Esophagus muscularis mucosa (tissue), 4 donors: ENCODE measurements at regions of chr11 and their contacts with region 1.

Region 1: DNA sequence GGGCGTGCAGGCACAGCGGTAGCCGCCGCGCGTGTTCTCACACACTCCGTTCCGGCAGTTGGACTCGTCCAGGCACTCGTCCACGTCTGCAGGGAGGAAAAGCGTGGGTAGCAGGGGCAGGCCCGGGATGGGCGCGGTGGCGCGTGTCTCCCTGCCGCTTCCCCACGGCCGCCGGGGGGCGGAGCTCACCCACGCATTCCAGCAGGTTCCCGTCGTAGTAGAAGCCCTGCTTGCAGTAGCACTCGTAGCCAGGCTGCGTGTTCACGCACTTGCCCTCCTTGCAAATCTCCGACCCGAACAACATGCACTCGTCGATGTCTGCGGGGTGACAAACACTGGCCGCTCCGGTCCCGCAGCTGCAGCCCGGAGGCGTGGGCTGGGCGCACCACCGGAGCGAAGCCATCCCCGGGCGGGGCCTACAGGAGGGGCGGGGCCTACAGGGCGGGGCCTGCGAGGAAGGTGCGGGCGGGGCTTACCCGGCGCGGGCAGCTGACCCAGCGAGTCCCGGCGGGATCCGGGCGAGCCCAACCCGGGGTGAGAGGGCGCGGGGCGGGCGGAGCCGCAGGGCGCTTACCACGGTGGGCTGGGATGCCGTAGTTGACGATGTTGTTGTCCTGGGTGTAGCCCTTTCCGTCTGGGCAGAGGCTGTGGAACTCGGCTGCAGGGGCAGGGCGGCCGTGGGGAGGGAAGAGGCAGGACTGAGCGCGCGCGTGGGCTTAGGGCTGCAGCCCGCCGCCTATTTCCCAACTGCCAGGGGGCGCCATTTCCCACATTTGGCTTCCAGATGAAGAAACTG is 15.6 kb downstream of the SCYL1 start:
- DNase-seq: peak; percentile 98
- H3K4me3 ChIP-seq: peak overlapping the region; percentile 56 to 73 (median 58)
- H3K27ac ChIP-seq: peak overlapping the region; percentile 86 to 94 (median 88)
- H3K4me1 ChIP-seq: peaks cover 23 to 36% (median 32%) of the 10 kb centered on the region in 4 donors
- H3K27me3 ChIP-seq: no peaks in the 10 kb centered on the region
- CTCF ChIP-seq: peak; percentile 90 to 97 (median 92)
- EP300 ChIP-seq: no peak
- POLR2A ChIP-seq: peak; percentile 19

Region 2: DNA sequence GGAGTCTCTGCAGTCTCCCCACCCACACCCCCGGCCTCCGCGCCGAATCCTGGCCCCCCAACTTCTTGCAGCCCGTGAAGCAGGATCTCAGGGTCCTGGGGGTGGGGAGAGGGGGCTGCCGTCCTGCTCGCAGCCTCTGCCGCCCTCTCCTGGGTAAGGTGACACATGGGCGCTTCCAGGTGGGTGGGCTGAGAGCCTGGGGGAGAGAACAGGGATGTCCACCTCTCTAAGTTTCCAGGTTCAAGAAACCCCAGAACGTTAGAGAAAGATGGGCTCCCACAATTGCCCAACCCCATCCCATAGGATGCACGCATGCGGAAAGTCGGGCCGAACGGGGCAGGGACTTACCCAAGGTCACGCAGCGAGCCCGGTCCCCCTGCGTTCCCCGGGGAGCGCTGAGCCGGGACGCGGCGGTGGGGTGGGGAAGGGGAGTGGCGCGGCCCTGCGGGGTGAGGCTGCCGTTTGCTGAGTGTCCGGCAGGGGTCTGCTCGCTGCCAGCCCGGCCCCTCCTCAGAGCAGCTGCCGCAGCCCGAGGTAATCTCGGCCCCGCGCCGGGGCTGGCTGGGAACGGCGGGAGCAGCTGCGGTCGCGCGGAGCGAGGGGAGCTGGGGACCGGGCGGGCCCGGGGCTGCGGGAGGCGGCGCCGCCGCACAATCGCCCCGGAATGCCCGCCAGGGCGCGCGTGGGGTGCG is 359.5 kb before region 1 on chr11:
- intact Hi-C with region 1: no loop called
- DNase-seq: no peak
- H3K4me3 ChIP-seq: peak overlapping the region; percentile 81 to 91 (median 87)
- H3K27ac ChIP-seq: peak overlapping the region; percentile 85 to 97 (median 91)
- H3K4me1 ChIP-seq: peaks cover 19 to 41% (median 34%) of the 10 kb centered on the region in 4 donors
- H3K27me3 ChIP-seq: no peaks in the 10 kb centered on the region
- CTCF ChIP-seq: peak in 2 of 3 experiments; percentile 22 to 55
- EP300 ChIP-seq: no peak
- POLR2A ChIP-seq: no peak

Region 3: GRCh38 chr11:65334696-65335295 is 205.7 kb before region 1 on chr11:
- intact Hi-C with region 1: no loop called
- DNase-seq: no peak
- H3K4me3 ChIP-seq: peak overlapping the region; percentile 76 to 88 (median 86)
- H3K27ac ChIP-seq: peak overlapping the region; percentile 82 to 94 (median 90)
- H3K4me1 ChIP-seq: peaks cover 22 to 61% (median 54%) of the 10 kb centered on the region in 4 donors
- H3K27me3 ChIP-seq: no peaks in the 10 kb centered on the region
- CTCF ChIP-seq: no peak
- EP300 ChIP-seq: no peak
- POLR2A ChIP-seq: no peak

Region 4: DNA sequence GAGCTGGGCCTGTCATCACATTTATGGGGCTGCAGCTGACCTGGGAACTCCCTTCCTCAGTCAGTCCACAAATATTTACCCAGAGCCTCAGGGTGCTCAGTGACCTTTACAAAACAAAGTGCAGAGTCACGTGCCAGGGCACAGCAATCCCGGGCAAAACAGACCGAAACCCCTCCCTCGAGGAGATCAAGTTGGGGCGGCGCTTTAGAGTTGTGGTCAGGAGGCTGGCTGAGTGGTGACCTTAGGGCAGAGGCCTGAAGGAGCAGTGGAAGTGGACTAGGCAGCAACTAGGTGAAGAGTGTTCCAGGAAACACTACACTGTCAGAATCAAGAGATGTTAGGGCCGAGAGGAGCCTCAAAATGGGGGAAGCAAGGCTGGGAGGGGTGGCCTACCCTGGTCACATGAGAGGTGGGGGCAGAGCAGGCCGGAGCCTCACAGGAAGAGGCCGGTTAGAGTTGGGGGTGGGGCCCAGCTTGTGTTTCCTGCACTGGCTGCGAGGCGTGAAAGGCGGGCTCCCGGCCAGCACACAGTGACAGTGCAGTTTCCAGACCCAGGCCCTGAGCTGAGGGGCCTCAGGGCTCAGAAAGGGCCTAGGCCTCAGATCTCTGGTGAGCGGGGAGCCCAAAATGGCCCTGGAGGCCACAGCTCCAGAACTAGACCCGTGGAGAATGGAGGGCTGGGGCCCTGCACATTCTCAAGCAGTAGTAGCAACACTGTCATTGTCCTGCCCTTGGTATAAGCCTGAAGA is 121.6 kb before region 1 on chr11:
- intact Hi-C with region 1: no loop called
- DNase-seq: peak; percentile 99
- H3K4me3 ChIP-seq: peak overlapping the region; percentile 71 to 81 (median 74)
- H3K27ac ChIP-seq: peak overlapping the region; percentile 97 to 99 (median 99)
- H3K4me1 ChIP-seq: peaks cover 52 to 66% (median 65%) of the 10 kb centered on the region in 4 donors
- H3K27me3 ChIP-seq: no peaks in the 10 kb centered on the region
- CTCF ChIP-seq: no peak
- EP300 ChIP-seq: peak; percentile 12
- POLR2A ChIP-seq: peak; percentile 40

Region 5: GRCh38 chr11:65593518-65594298 is 53.2 kb after region 1 on chr11:
- intact Hi-C with region 1: loop called (anchors 5 kb)
- DNase-seq: no peak
- H3K4me3 ChIP-seq: no peak overlapping the region
- H3K27ac ChIP-seq: peak overlapping the region; percentile 21 to 96 (median 49)
- H3K4me1 ChIP-seq: peaks cover 29 to 68% (median 57%) of the 10 kb centered on the region in 4 donors
- H3K27me3 ChIP-seq: no peaks in the 10 kb centered on the region
- CTCF ChIP-seq: peak; percentile 63 to 75 (median 74)
- EP300 ChIP-seq: no peak
- POLR2A ChIP-seq: no peak

Region 6: GRCh38 chr11:65672186-65672860 is 131.8 kb after region 1 on chr11:
- intact Hi-C with region 1: no loop called
- DNase-seq: no peak
- H3K4me3 ChIP-seq: no peak overlapping the region
- H3K27ac ChIP-seq: no peak overlapping the region
- H3K4me1 ChIP-seq: no peaks in the 10 kb centered on the region
- H3K27me3 ChIP-seq: no peaks in the 10 kb centered on the region
- CTCF ChIP-seq: no peak
- EP300 ChIP-seq: no peak
- POLR2A ChIP-seq: no peak